ENCODE measurements at regions of chr11 and their contacts with region 1.

Region 1: GRCh38 chr11:128315933-128316332 is 271.4 kb downstream of the ETS1 start:
- DNase-seq: no peak
- H3K4me3 ChIP-seq: no peak overlapping the region
- H3K27ac ChIP-seq: no peak overlapping the region
- H3K4me1 ChIP-seq: no peaks in the 10 kb centered on the region
- H3K27me3 ChIP-seq: no peaks in the 10 kb centered on the region
- CTCF ChIP-seq: no peak
- POLR2A ChIP-seq: no peak

Region 2: GRCh38 chr11:128214263-128214662 is 101.7 kb before region 1 on chr11:
- CTCF ChIA-PET with region 1: no interaction called
- POLR2A ChIA-PET with region 1: no interaction called
- dilution Hi-C with region 1: no loop called
- intact Hi-C with region 1: no loop called
- DNase-seq: no peak
- H3K4me3 ChIP-seq: no peak overlapping the region
- H3K27ac ChIP-seq: no peak overlapping the region
- H3K4me1 ChIP-seq: peaks cover 20% of the 10 kb centered on the region
- H3K27me3 ChIP-seq: no peaks in the 10 kb centered on the region
- CTCF ChIP-seq: no peak
- POLR2A ChIP-seq: no peak

Region 3: GRCh38 chr11:128336203-128336602 is 20.3 kb after region 1 on chr11:
- CTCF ChIA-PET with region 1: no interaction called
- POLR2A ChIA-PET with region 1: no interaction called
- dilution Hi-C with region 1: no loop called
- intact Hi-C with region 1: loop called (anchors 2 kb)
- DNase-seq: peak; percentile 88
- H3K4me3 ChIP-seq: no peak overlapping the region
- H3K27ac ChIP-seq: peak overlapping the region; percentile 87
- H3K4me1 ChIP-seq: peaks cover 43% of the 10 kb centered on the region
- H3K27me3 ChIP-seq: no peaks in the 10 kb centered on the region
- CTCF ChIP-seq: no peak
- POLR2A ChIP-seq: peak; percentile 17

Region 4: GRCh38 chr11:128398517-128399250 is 82.8 kb after region 1 on chr11:
- CTCF ChIA-PET with region 1: no interaction called
- POLR2A ChIA-PET with region 1: no interaction called
- dilution Hi-C with region 1: no loop called
- intact Hi-C with region 1: no loop called
- DNase-seq: no peak
- H3K4me3 ChIP-seq: no peak overlapping the region
- H3K27ac ChIP-seq: no peak overlapping the region
- H3K4me1 ChIP-seq: peaks cover 12% of the 10 kb centered on the region
- H3K27me3 ChIP-seq: no peaks in the 10 kb centered on the region
- CTCF ChIP-seq: no peak
- POLR2A ChIP-seq: no peak

Region 5: DNA sequence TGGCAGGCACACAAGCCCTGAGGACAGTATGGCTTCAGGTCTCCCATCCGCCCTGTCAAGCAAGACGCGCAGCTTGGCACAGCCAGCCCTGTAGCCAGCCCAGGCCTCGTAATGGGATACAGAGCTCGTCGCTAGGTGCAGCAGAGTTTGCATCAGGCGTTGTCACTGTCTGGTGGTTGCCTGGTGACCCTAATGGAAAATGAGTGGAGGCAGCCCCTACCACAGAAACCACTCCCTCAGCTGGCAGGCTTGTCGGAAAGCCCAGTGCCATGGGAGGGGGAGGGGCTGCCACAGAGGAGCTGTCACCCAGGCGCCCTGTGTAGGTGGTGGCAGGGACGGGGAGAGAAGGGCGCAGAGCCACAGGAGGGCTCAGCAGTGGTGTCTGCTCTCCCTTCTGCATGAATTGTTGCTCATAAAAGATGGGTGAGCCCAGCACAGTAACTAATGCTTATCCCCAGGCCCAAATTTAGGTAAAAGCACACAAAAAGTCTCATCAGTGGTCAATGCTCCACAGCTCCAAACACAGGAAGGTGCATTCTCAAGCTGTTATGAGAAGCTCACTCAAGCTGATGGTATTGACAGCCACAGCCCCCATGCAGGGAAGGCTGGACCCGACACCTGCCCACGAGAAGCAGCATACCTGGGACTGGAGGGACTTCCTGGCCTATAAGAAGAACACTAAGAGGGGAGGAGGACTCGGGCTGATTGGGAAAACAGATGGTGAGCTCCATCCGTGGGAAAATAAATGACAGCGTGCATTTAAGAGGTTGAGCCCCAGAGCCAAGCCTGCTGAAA is 106.8 kb after region 1 on chr11:
- CTCF ChIA-PET with region 1: no interaction called
- POLR2A ChIA-PET with region 1: no interaction called
- dilution Hi-C with region 1: no loop called
- intact Hi-C with region 1: no loop called
- DNase-seq: no peak
- H3K4me3 ChIP-seq: no peak overlapping the region
- H3K27ac ChIP-seq: no peak overlapping the region
- H3K4me1 ChIP-seq: no peaks in the 10 kb centered on the region
- H3K27me3 ChIP-seq: peaks cover 0 to 1% of the 10 kb centered on the region in 2 experiments
- CTCF ChIP-seq: no peak
- POLR2A ChIP-seq: no peak

Measured in endothelial cell of umbilical vein (primary cell).